GM12878 (cell line): ENCODE measurements at regions of chr15 and their contacts with region 1.

Region 1: DNA sequence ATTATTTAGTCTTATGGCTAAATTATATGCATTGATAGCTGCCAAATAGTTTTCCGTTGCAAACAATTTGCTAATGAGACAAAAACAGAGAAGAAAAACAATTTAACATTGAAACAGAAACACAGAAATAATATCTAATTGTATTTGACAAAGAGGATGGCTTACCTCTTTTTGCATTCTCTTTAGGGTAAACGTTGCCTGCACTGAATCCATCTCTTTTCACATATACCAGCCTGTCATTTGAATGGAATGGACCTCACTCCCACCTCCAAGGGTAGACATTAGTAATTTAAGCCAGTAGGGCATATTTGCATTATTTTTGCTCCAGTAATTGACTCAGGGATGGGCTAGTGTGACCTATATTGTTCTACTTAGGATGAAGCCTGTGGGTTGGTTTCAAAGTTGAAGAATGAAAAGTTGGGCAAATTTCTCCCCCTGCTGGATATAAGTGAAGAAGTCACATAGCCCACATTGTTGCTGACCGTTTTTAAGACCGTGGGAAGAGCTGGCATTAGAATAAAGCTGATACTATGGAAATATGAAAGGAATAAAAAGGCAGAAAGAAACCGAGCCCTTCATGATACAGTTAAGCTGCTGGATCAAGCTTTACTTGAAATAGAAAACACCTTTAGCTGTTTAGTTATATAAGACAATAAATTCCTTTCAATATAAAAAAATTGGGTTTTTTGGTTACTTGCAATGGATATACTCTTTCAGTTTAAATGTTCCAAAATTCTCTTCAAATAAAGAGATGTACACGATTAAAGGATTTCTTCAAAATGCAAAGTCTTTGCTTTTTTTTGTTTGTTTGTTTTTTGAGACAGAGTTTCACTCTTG is 26.9 kb downstream of the PIERCE2 start:
- DNase-seq: no peak
- ATAC-seq: peak; percentile 94
- H3K4me3 ChIP-seq: no peak overlapping the region
- H3K27ac ChIP-seq: no peak overlapping the region
- H3K4me1 ChIP-seq: no peaks in the 10 kb centered on the region
- H3K27me3 ChIP-seq: no peaks in the 10 kb centered on the region
- CTCF ChIP-seq: peak; percentile 54 to 66 (median 56)
- EP300 ChIP-seq: no peak
- POLR2A ChIP-seq: no peak
- RAD21 ChIP-seq: peak; percentile 78

Region 2: GRCh38 chr15:53962332-53963241 is 1472.6 kb before region 1 on chr15:
- CTCF ChIA-PET with region 1: interaction called, 16 read pairs
- POLR2A ChIA-PET with region 1: no interaction called
- RAD21 ChIA-PET with region 1: interaction called, 6 read pairs
- SMC1A ChIA-PET with region 1: interaction called, 3 read pairs
- in situ Hi-C with region 1: loop called (anchors 25 kb)
- intact Hi-C with region 1: loop called (anchors 10 kb)
- DNase-seq: no peak
- ATAC-seq: peak; percentile 94
- H3K4me3 ChIP-seq: no peak overlapping the region
- H3K27ac ChIP-seq: no peak overlapping the region
- H3K4me1 ChIP-seq: no peaks in the 10 kb centered on the region
- H3K27me3 ChIP-seq: no peaks in the 10 kb centered on the region
- CTCF ChIP-seq: peak; percentile 42 to 70 (median 61)
- EP300 ChIP-seq: no peak
- POLR2A ChIP-seq: no peak
- RAD21 ChIP-seq: peak; percentile 68

Region 3: GRCh38 chr15:55221090-55222011 is 213.9 kb before region 1 on chr15:
- CTCF ChIA-PET with region 1: interaction called, 60 read pairs
- POLR2A ChIA-PET with region 1: no interaction called
- RAD21 ChIA-PET with region 1: interaction called, 33 read pairs
- SMC1A ChIA-PET with region 1: interaction called, 44 read pairs
- in situ Hi-C with region 1: loop called (anchors 5 kb)
- intact Hi-C with region 1: loop called (anchors 1 kb)
- DNase-seq: peak; percentile 52
- ATAC-seq: peak; percentile 71
- H3K4me3 ChIP-seq: no peak overlapping the region
- H3K27ac ChIP-seq: no peak overlapping the region; the same call in 1 of the 2 replicates
- H3K4me1 ChIP-seq: peaks cover 33% of the 10 kb centered on the region
- H3K27me3 ChIP-seq: no peaks in the 10 kb centered on the region
- CTCF ChIP-seq: no peak
- EP300 ChIP-seq: 0 out of 4 replicates have a peak, but pooled peaks of 1 of the 2 experiments have one; percentile 22
- POLR2A ChIP-seq: no peak
- RAD21 ChIP-seq: 0 out of 2 replicates have a peak, but pooled peaks have one; percentile 2

Region 4: DNA sequence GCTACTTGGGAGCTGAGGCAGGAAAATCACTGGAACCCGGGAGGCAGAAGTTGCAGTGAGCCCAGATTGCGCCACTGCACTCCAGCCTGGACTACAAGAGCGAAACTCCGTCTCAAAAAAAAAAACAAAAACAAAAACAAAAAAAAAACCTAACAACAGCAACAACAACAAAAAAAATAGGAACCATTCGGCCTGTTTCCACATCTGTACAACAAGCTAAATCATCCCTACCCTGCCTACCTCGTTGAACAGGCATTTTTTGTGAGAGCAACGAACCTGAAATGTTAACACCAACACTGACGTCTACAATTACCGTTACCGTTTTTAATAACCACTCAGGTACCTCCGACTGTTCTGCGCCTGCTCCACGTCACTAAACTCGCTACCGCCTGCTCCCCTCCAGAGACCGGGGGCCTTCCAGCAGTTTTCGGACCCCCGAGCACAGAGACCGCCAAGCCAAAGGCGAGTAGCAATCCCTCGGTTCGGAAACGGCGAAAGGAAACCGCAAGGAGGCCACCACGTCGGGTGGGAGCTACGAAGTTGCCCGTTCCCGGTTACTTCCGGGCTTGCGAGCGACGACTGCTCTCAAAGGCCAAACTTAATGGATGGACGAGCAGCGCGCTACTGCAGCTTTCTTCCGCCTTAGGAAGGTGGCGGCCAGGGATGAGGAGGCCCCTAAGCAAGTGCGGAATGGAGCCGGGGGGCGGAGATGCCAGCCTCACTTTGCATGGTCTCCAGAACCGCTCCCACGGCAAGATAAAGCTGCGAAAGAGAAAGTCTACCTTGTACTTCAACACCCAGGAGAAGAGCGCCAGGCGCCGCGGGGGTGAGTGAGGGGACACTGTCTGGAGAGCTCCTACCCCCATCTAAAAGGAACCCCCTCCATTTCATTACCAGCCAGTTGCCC is 116.4 kb before region 1 on chr15 and contains the starts of genes PIGB and PIGBOS1:
- CTCF ChIA-PET with region 1: interaction called, 13 read pairs
- POLR2A ChIA-PET with region 1: interaction called, 4 read pairs
- RAD21 ChIA-PET with region 1: interaction called, 15 read pairs
- SMC1A ChIA-PET with region 1: interaction called, 5 read pairs
- in situ Hi-C with region 1: no loop called
- intact Hi-C with region 1: no loop called
- DNase-seq: peak; percentile 76
- ATAC-seq: peak; percentile 92
- H3K4me3 ChIP-seq: peak within 1 kb of the TSS; percentile 80
- H3K27ac ChIP-seq: peak within 1 kb of the TSS; percentile 100
- H3K4me1 ChIP-seq: no peaks in the 10 kb centered on the region
- H3K27me3 ChIP-seq: no peaks in the 10 kb centered on the region
- CTCF ChIP-seq: no peak
- EP300 ChIP-seq: no peak
- POLR2A ChIP-seq: peak; percentile 93
- RAD21 ChIP-seq: no peak
- polyA plus RNA-seq, gene PIGB: 22.7 to 44.6 TPM
- polyA plus RNA-seq, gene PIGBOS1: 19.9 to 24.7 TPM

Region 5: DNA sequence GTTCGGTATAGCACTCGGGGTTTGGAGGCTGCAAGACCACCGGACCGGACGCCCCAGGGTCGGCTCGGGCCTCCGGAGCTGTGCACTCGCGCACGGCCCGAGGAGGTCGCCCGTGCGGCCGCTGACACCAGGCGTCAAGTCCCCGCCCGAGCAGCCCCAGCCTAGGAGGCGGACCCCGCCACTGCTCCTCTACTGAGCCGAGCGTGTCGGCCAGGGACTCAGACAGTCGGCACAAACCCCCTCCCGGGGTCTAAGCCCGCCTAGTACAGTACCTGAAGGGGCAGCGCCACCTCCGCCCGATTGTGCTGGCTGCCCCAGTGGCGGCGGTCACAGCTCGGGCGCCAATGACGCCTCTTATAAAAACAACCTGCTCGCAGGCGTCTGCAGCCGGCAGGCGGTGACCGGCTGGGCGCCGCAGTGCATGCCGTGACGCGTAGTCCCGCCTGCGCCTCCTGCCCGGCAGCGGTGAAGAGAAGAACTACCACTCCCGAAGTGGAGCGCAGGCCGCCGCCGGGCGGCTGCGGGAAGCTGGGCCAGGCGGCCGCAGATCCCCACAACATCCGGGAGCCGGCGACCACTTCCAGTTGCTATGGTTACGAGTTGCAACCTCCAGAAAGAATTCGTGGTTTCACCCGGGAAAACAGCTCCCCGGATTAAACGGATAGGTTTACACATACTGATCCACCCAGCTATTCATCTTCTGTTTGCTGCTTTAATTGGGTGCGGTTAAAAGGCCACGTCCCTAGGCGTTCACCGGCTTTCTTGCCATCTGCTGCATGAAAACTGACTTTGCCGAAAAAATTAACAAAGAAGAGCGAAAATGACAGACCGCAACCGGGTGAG is 27.0 kb before region 1 on chr15 and contains the starts of genes CCPG1 and PIERCE2:
- CTCF ChIA-PET with region 1: interaction called, 11 read pairs
- POLR2A ChIA-PET with region 1: no interaction called
- RAD21 ChIA-PET with region 1: interaction called, 6 read pairs
- SMC1A ChIA-PET with region 1: interaction called, 5 read pairs
- in situ Hi-C with region 1: no loop called
- intact Hi-C with region 1: no loop called
- DNase-seq: peak; percentile 72
- ATAC-seq: peak; percentile 92
- H3K4me3 ChIP-seq: peak within 1 kb of the TSS; percentile 78
- H3K27ac ChIP-seq: peak within 1 kb of the TSS; percentile 55
- H3K4me1 ChIP-seq: peaks cover 22% of the 10 kb centered on the region
- H3K27me3 ChIP-seq: no peaks in the 10 kb centered on the region
- CTCF ChIP-seq: peak; percentile 58 to 73 (median 64)
- EP300 ChIP-seq: peak in 1 of 2 experiments; percentile 60; a peak in 1 of 4 replicates
- POLR2A ChIP-seq: peak; percentile 86
- RAD21 ChIP-seq: no peak
- polyA plus RNA-seq, gene CCPG1: 6.6 to 7.5 TPM
- polyA plus RNA-seq, gene PIERCE2: 0.93 to 1.3 TPM

Region 6: GRCh38 chr15:55630858-55631257 is 195.7 kb after region 1 on chr15:
- CTCF ChIA-PET with region 1: interaction called, 3 read pairs
- POLR2A ChIA-PET with region 1: no interaction called
- RAD21 ChIA-PET with region 1: no interaction called
- SMC1A ChIA-PET with region 1: no interaction called
- in situ Hi-C with region 1: no loop called
- intact Hi-C with region 1: loop called (anchors 10 kb)
- DNase-seq: no peak
- ATAC-seq: no peak
- H3K4me3 ChIP-seq: no peak overlapping the region
- H3K27ac ChIP-seq: no peak overlapping the region
- H3K4me1 ChIP-seq: no peaks in the 10 kb centered on the region
- H3K27me3 ChIP-seq: no peaks in the 10 kb centered on the region
- CTCF ChIP-seq: no peak
- EP300 ChIP-seq: no peak
- POLR2A ChIP-seq: no peak
- RAD21 ChIP-seq: no peak